Activated naive CD4-positive, alpha-beta T cell treated with anti-CD3 and anti-CD28 coated beads, Interleukin-2, amount 10 ng/mL, durations not matched to agents 7 days and 5 days (primary cell): ENCODE measurements at regions of chr7 and their contacts with region 1.

Region 1: GRCh38 chr7:16982640-16983350 is 101.0 kb upstream of the AGR3 start:
- DNase-seq: peak; percentile 48
- H3K4me3 Mint-ChIP-seq: no peak overlapping the region
- H3K27ac Mint-ChIP-seq: no peak overlapping the region
- H3K4me1 Mint-ChIP-seq: peaks cover 16% of the 10 kb centered on the region
- H3K27me3 Mint-ChIP-seq: peaks cover 17% of the 10 kb centered on the region

Region 2: GRCh38 chr7:16926283-16926682 is 56.5 kb before region 1 on chr7:
- CTCF ChIA-PET with region 1: interaction called, 10 read pairs
- DNase-seq: peak; percentile 48
- H3K4me3 Mint-ChIP-seq: no peak overlapping the region
- H3K27ac Mint-ChIP-seq: no peak overlapping the region
- H3K4me1 Mint-ChIP-seq: peaks cover 68% of the 10 kb centered on the region
- H3K27me3 Mint-ChIP-seq: no peaks in the 10 kb centered on the region

Region 3: DNA sequence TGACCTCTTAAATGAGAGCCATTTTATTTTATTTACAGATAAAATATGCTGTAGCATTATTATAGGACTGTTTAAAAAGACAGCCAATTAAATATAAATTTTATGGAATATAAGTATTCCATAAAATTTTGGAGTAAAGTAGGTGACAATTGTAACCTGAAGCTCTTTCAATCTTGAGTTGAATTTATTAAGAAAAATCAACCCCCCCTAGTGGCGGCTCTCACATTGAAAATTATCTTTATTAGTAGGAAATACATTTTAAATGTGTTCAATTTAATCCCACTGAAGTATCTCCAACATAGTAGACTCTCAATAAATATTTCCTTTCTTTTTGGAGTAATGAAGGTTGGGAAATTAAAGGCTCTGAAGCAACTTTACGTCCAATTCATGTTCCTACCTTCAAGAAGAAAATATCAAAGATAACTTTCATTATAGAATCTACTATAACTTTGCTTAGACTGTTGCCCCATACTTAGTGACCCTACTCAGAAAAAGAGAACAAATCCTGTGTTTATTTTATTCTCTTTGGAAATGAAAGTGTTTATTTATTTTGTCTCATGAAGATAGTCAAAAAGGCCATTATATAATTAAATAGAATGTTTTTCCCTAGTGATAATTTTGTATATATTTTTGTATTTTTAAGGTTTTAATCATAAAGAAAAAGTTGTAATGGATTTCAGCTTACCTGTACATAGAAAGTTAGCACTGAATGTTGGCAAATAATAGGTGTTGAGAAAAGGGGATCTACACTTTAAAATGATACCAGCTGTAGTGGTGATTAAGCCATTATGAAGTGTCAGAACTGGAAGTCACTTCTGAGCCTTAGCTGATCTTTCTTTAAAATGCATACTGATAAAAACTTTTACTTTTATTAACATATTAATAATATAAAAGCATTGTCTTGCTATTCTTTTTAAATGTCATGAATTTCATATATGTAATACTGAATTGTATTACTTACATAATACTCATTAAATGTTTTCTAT is 319.0 kb after region 1 on chr7:
- CTCF ChIA-PET with region 1: interaction called, 15 read pairs
- DNase-seq: peak; percentile 54
- H3K4me3 Mint-ChIP-seq: peak overlapping the region; percentile 51
- H3K27ac Mint-ChIP-seq: no peak overlapping the region
- H3K4me1 Mint-ChIP-seq: peaks cover 58% of the 10 kb centered on the region
- H3K27me3 Mint-ChIP-seq: no peaks in the 10 kb centered on the region

Region 4: GRCh38 chr7:17646253-17646956 is 663.6 kb after region 1 on chr7:
- CTCF ChIA-PET with region 1: interaction called, 11 read pairs
- DNase-seq: no peak
- H3K4me3 Mint-ChIP-seq: no peak overlapping the region
- H3K27ac Mint-ChIP-seq: no peak overlapping the region
- H3K4me1 Mint-ChIP-seq: no peaks in the 10 kb centered on the region
- H3K27me3 Mint-ChIP-seq: peaks cover 23% of the 10 kb centered on the region